ENCODE measurements at regions of chr12 and their contacts with region 1.

Region 1: DNA sequence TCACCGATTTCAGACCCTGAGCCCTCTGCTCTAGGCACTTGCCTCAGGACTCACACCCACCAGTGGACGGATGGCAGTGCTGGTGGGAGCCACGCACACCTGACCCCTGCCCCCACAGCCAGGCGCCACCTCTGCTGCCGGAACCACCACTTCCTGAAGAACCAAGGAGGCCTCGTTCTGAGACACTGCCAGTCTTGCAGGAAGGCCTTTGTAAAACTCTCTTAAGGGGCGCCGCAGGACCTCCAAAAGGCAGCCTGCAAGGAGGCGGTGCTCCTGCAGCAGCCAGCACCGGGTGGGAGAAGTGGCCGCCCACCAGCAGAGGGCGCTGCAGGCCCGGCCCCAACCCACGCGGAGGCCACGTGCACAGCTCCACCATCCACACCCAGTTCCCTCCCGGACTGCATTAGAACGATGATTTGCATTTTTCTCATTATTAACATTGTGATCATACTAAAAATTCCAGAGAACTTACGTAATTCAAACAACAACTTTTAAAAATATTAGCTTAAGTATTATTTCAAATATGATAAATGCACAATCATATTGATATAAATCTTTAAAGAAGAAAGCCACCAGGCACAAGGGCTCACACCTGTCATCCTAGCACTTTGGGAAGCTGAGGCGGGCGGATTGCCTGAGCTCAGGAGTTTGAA is 12.8 kb downstream of the STX2 start:
- DNase-seq: peak; percentile 55 to 91 (median 79)
- ATAC-seq: peak; percentile 98
- H3K4me3 ChIP-seq: no peak overlapping the region
- H3K4me3 Mint-ChIP-seq: no peak overlapping the region
- H3K27ac ChIP-seq: peak overlapping the region in 1 of 2 experiments; percentile 8
- H3K27ac Mint-ChIP-seq: peak overlapping the region; percentile 74
- H3K4me1 ChIP-seq: peaks cover 9% of the 10 kb centered on the region
- H3K4me1 Mint-ChIP-seq: peaks cover 17% of the 10 kb centered on the region
- H3K27me3 ChIP-seq: no peaks in the 10 kb centered on the region
- H3K27me3 Mint-ChIP-seq: no peaks in the 10 kb centered on the region
- CTCF ChIP-seq: peak; percentile 87

Region 2: GRCh38 chr12:130474599-130475269 is 351.5 kb before region 1 on chr12:
- CTCF ChIA-PET with region 1: no interaction called
- POLR2A ChIA-PET with region 1: no interaction called
- intact Hi-C with region 1: no loop called
- DNase-seq: no peak
- ATAC-seq: no peak
- H3K4me3 ChIP-seq: no peak overlapping the region
- H3K4me3 Mint-ChIP-seq: no peak overlapping the region
- H3K27ac ChIP-seq: no peak overlapping the region
- H3K27ac Mint-ChIP-seq: no peak overlapping the region
- H3K4me1 ChIP-seq: no peaks in the 10 kb centered on the region
- H3K4me1 Mint-ChIP-seq: no peaks in the 10 kb centered on the region
- H3K27me3 ChIP-seq: no peaks in the 10 kb centered on the region
- H3K27me3 Mint-ChIP-seq: no peaks in the 10 kb centered on the region
- CTCF ChIP-seq: no peak

Region 3: GRCh38 chr12:130838951-130839769 is 12.9 kb after region 1 on chr12 and contains the start of gene STX2:
- CTCF ChIA-PET with region 1: interaction called, 17 read pairs
- POLR2A ChIA-PET with region 1: interaction called, 3 read pairs
- intact Hi-C with region 1: loop called in 1 of 2 experiments (anchors 1 kb)
- DNase-seq: peak; percentile 82 to 95 (median 88)
- ATAC-seq: peak; percentile 95
- H3K4me3 ChIP-seq: peak within 1 kb of the TSS; percentile 62 to 88
- H3K4me3 Mint-ChIP-seq: peak within 1 kb of the TSS; percentile 83
- H3K27ac ChIP-seq: peak within 1 kb of the TSS; percentile 50 to 63
- H3K27ac Mint-ChIP-seq: peak within 1 kb of the TSS; percentile 88
- H3K4me1 ChIP-seq: peaks cover 9% of the 10 kb centered on the region
- H3K4me1 Mint-ChIP-seq: peaks cover 27% of the 10 kb centered on the region
- H3K27me3 ChIP-seq: no peaks in the 10 kb centered on the region
- H3K27me3 Mint-ChIP-seq: no peaks in the 10 kb centered on the region
- CTCF ChIP-seq: peak; percentile 25
- total RNA-seq, gene STX2: 15.8 to 18.2 TPM

Region 4: GRCh38 chr12:130871286-130872178 is 45.3 kb after region 1 on chr12 and contains the start of gene RAN:
- CTCF ChIA-PET with region 1: interaction called, 10 read pairs
- POLR2A ChIA-PET with region 1: no interaction called
- intact Hi-C with region 1: loop called in 1 of 2 experiments (anchors 1 kb)
- DNase-seq: peak; percentile 83 to 98 (median 89)
- ATAC-seq: peak; percentile 80
- H3K4me3 ChIP-seq: peak within 1 kb of the TSS; percentile 72 to 82
- H3K4me3 Mint-ChIP-seq: peak within 1 kb of the TSS; percentile 94
- H3K27ac ChIP-seq: peak within 1 kb of the TSS; percentile 84 to 85
- H3K27ac Mint-ChIP-seq: peak within 1 kb of the TSS; percentile 95
- H3K4me1 ChIP-seq: peaks cover 54% of the 10 kb centered on the region
- H3K4me1 Mint-ChIP-seq: peaks cover 65% of the 10 kb centered on the region
- H3K27me3 ChIP-seq: no peaks in the 10 kb centered on the region
- H3K27me3 Mint-ChIP-seq: no peaks in the 10 kb centered on the region
- CTCF ChIP-seq: no peak
- total RNA-seq, gene RAN: 342 to 352 TPM

Region 5: DNA sequence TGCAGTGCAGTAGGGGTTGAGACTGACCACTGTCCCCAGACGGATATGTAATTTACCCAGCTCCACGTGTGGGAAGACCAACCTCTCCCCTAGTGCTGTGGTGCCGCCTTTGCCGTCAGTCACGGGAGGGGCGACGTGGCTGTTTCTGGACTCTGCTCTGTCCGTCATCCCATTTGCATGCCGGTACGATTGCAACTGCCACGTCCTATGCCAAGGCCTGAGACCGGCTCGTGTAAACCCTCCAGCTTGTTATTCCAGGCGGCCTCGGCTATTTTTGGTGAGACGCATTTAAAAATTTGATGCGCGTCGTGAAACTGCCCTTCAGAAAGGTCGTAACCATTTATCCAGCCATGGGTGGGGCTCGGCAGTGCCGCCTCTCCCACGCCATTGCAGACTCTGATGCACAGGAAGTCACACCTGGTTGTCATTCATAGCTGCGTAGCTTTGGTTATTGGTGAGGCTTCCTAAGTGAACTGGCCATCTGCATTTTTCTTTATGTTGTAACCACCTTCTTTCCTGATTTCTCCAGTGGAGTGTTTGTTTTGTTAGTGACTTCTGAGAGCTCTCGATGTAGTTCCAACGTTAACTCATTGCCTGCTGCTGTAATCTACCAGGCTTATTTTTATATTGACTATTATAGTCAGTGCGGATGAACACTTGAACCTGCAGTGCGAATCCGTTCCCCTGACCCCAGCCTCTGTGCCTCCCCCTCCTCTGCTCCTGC is 202.5 kb after region 1 on chr12:
- CTCF ChIA-PET with region 1: interaction called, 3 read pairs
- POLR2A ChIA-PET with region 1: no interaction called
- intact Hi-C with region 1: loop called in 1 of 2 experiments (anchors 10 kb)
- DNase-seq: no peak
- ATAC-seq: no peak
- H3K4me3 ChIP-seq: no peak overlapping the region
- H3K4me3 Mint-ChIP-seq: no peak overlapping the region
- H3K27ac ChIP-seq: no peak overlapping the region
- H3K27ac Mint-ChIP-seq: no peak overlapping the region
- H3K4me1 ChIP-seq: no peaks in the 10 kb centered on the region
- H3K4me1 Mint-ChIP-seq: no peaks in the 10 kb centered on the region
- H3K27me3 ChIP-seq: no peaks in the 10 kb centered on the region
- H3K27me3 Mint-ChIP-seq: no peaks in the 10 kb centered on the region
- CTCF ChIP-seq: no peak

Region 6: DNA sequence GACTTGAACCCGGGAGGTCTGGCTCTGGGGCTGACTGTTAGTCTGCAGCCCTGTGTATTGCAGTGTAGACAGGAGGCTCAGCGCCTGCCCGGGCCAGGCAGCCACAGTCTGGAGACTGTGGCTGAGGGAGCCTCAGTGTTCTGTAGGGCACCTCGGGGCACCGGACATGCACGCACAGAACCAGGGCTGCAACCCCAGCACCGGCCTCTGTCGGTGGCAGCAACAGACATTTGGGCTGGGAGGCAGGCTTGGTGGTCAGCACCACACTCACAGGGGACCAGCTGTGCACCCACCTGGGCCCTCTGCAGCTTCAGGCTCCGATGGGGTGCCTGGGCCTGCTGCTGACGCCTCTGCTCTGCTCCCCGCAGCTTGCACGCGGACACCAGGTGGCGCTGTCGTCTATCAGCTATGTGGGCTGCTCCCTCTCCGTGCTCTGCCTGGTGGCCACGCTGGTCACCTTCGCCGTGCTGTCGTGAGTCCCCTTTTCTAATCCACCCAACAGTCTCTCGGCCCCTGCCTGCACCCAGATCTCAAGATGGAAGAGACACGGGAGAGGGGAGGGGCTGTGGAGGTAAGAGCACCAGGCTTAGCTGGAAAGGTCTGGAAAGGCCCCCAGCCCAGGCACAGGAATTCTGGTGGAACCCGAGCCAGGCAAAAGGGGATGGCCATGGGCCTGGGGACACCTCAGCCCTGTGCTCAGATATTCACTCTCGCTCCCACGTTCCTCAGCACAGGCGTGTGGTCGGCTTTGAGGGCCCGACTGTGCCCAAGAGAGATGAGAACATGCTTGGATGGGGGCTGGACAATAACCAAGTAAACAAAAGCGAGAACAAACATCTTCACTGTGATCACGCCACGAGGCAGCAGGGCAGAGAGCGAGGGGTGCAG is 278.4 kb after region 1 on chr12:
- CTCF ChIA-PET with region 1: interaction called, 6 read pairs
- POLR2A ChIA-PET with region 1: no interaction called
- intact Hi-C with region 1: loop called in 1 of 2 experiments (anchors 10 kb)
- DNase-seq: peak; percentile 61 to 85 (median 79)
- ATAC-seq: peak; percentile 52
- H3K4me3 ChIP-seq: no peak overlapping the region
- H3K4me3 Mint-ChIP-seq: peak overlapping the region; percentile 35
- H3K27ac ChIP-seq: no peak overlapping the region
- H3K27ac Mint-ChIP-seq: peak overlapping the region; percentile 18
- H3K4me1 ChIP-seq: peaks cover 17% of the 10 kb centered on the region
- H3K4me1 Mint-ChIP-seq: peaks cover 17% of the 10 kb centered on the region
- H3K27me3 ChIP-seq: no peaks in the 10 kb centered on the region
- H3K27me3 Mint-ChIP-seq: peaks cover 2% of the 10 kb centered on the region
- CTCF ChIP-seq: peak; percentile 71

Region 7: DNA sequence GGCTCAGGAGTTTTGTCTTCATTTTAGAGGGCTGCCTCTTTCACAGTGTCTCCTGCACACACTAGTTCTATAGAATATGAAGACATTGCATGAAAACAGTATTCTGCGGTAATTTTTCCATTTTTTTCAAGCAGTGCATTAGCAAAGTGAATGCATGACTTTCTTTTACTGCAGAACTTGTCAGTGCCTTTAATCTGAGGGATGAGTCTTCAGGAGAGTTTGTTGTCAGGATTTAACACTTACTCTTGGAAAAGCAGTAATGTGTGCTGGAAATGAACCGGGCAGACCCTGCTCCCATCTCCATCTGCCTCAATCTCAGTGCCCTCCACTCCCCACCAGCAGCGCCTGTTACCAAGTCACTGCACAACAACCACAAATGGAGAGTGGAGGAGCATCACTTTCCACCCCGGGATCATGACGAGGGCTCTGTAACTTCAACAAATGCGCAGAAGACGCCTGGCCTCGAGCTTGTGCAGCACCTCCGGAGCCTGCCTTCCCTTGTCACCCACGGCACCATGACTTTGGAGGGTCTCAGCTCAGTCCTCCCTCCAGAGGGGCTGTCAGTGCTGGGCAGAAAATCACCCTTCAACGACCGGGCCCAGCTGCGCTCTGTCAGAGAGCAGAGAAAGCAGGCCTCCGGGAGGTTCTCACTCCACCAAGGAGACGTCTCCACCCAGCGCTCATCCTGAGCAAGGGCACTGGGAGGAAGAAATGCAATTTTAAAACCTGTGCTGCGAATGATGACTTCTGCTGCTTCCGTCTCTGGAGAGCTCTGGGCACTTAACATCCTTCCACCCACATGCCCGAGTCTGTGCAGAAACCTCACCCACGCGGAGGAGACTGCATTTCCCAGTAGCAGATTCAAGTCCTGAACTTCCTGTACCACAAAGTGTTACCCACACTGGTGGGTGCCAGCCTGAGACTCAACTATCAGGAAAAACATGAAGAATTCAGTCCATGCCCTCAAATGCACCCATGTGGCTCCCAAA is 383.1 kb after region 1 on chr12:
- CTCF ChIA-PET with region 1: no interaction called
- POLR2A ChIA-PET with region 1: no interaction called
- intact Hi-C with region 1: no loop called
- DNase-seq: no peak
- ATAC-seq: no peak
- H3K4me3 ChIP-seq: no peak overlapping the region
- H3K4me3 Mint-ChIP-seq: no peak overlapping the region
- H3K27ac ChIP-seq: no peak overlapping the region
- H3K27ac Mint-ChIP-seq: no peak overlapping the region
- H3K4me1 ChIP-seq: no peaks in the 10 kb centered on the region
- H3K4me1 Mint-ChIP-seq: peaks cover 3% of the 10 kb centered on the region
- H3K27me3 ChIP-seq: no peaks in the 10 kb centered on the region
- H3K27me3 Mint-ChIP-seq: peaks cover 2% of the 10 kb centered on the region
- CTCF ChIP-seq: no peak

Measured in CD8-positive, alpha-beta T cell (primary cell).